Transverse colon (tissue), 4 donors: ENCODE measurements at regions of chr6 and their contacts with region 1.

Region 1: GRCh38 chr6:5143634-5144311 is 58.6 kb downstream of the PPP1R3G start:
- DNase-seq: peak; percentile 88
- H3K4me3 ChIP-seq: no peak overlapping the region
- H3K27ac ChIP-seq: no peak overlapping the region
- H3K4me1 ChIP-seq: no peaks in the 10 kb centered on the region
- H3K27me3 ChIP-seq: no peaks in the 10 kb centered on the region
- CTCF ChIP-seq: peak; percentile 83 to 94 (median 86)
- EP300 ChIP-seq: no peak
- POLR2A ChIP-seq: no peak

Region 2: DNA sequence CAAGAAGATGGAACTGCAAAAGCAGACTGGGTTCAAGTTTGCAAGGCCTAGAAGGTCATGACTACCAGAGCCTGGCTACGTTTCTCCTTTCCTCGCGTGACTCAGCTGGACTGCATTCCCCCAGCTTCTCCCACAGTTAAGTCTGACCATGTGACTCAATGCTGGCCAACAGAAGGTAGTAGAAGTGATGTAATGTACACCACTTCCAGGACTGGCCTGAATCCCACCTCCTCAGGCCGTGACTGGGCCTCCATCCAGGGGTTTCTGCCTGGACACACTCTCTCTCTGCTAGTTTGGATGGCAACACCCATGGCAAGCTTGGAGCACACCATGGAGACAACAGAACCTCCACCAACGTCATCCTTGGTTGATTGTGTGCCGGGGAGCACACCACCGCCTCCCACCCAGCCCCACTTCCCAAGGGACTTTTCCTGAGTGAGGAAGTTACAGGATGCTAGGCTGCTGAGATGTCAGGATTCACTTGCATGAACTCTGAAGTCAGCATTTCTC is 479.6 kb before region 1 on chr6:
- in situ Hi-C with region 1: no loop called
- intact Hi-C with region 1: no loop called
- DNase-seq: peak; percentile 25
- H3K4me3 ChIP-seq: no peak overlapping the region
- H3K27ac ChIP-seq: no peak overlapping the region
- H3K4me1 ChIP-seq: no peaks in the 10 kb centered on the region
- H3K27me3 ChIP-seq: no peaks in the 10 kb centered on the region
- CTCF ChIP-seq: no peak
- EP300 ChIP-seq: no peak
- POLR2A ChIP-seq: no peak

Region 3: GRCh38 chr6:5302995-5303622 is 159.3 kb after region 1 on chr6:
- in situ Hi-C with region 1: loop called in 1 of 4 experiments (anchors 10 kb)
- intact Hi-C with region 1: no loop called
- DNase-seq: peak; percentile 55
- H3K4me3 ChIP-seq: no peak overlapping the region
- H3K27ac ChIP-seq: no peak overlapping the region
- H3K4me1 ChIP-seq: peaks cover 0 to 15% (median 9%) of the 10 kb centered on the region in 4 donors
- H3K27me3 ChIP-seq: no peaks in the 10 kb centered on the region
- CTCF ChIP-seq: peak; percentile 30 to 60 (median 52)
- EP300 ChIP-seq: no peak
- POLR2A ChIP-seq: no peak

Region 4: GRCh38 chr6:5398530-5398929 is 254.8 kb after region 1 on chr6:
- in situ Hi-C with region 1: loop called in 3 of 4 experiments (anchors 10 kb)
- intact Hi-C with region 1: loop called (anchors 10 kb)
- DNase-seq: no peak
- H3K4me3 ChIP-seq: no peak overlapping the region
- H3K27ac ChIP-seq: no peak overlapping the region
- H3K4me1 ChIP-seq: no peaks in the 10 kb centered on the region
- H3K27me3 ChIP-seq: no peaks in the 10 kb centered on the region
- CTCF ChIP-seq: peak; percentile 32 to 42 (median 36)
- EP300 ChIP-seq: no peak
- POLR2A ChIP-seq: no peak

Region 5: DNA sequence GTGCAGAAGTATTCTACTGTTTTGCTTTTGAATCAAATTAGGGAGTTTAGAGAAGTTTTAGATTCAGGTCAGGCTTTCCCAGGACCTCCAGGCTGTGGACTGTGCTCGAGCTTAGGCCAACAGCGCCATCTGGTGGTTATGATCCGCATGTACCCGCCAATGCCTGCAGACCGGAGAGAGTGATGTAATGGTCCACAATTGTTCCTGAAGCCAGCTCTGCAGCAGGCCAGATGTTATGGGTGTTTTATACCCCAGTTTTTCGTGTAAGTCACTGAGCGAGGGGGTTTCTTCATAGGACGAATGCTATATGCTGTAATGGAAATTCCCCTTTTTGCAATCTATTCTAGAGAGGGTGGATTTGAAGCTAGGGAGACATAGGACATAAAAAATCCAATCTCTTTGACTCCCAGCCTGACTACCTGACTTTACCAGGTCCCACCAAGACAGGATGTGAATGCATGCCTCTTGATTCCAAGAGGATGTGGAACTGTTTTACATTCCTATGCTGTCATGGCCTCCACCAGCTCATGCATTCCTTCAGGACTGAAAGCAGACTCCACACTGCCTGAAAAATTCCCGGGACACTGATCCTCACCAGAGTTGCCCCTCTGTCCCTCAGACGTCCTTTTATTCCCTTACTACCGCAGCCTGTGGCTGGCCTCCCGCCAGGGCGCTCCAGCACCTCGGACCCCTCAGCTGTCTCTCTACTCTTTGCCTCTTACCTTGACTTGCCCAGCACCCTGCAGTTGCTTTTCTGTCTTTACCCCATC is 1403.5 kb after region 1 on chr6:
- in situ Hi-C with region 1: loop called in 1 of 4 experiments (anchors 25 kb)
- intact Hi-C with region 1: loop called (anchors 5 kb)
- DNase-seq: peak; percentile 85
- H3K4me3 ChIP-seq: peak overlapping the region in 3 of 4 donors; percentile 7 to 44 (median 30)
- H3K27ac ChIP-seq: no peak overlapping the region
- H3K4me1 ChIP-seq: peaks cover 10 to 12% (median 11%) of the 10 kb centered on the region in 4 donors
- H3K27me3 ChIP-seq: peaks cover 38% of the 10 kb centered on the region
- CTCF ChIP-seq: peak; percentile 89 to 92 (median 91)
- EP300 ChIP-seq: no peak
- POLR2A ChIP-seq: no peak

Region 6: GRCh38 chr6:6556738-6557505 is 1413.1 kb after region 1 on chr6:
- in situ Hi-C with region 1: loop called in 1 of 4 experiments (anchors 25 kb)
- intact Hi-C with region 1: no loop called
- DNase-seq: peak; percentile 32
- H3K4me3 ChIP-seq: no peak overlapping the region
- H3K27ac ChIP-seq: no peak overlapping the region
- H3K4me1 ChIP-seq: no peaks in the 10 kb centered on the region
- H3K27me3 ChIP-seq: no peaks in the 10 kb centered on the region
- CTCF ChIP-seq: peak; percentile 46 to 74 (median 66)
- EP300 ChIP-seq: no peak
- POLR2A ChIP-seq: no peak